ENCODE measurements at regions of chr9 and their contacts with region 1.

Region 1: GRCh38 chr9:92954049-92954861 is 6.9 kb downstream of the FGD3 start:
- DNase-seq: peak; percentile 53 to 95 (median 87)
- ATAC-seq: peak; percentile 87
- H3K4me3 ChIP-seq: peak overlapping the region; percentile 31 to 39
- H3K4me3 Mint-ChIP-seq: peak overlapping the region; percentile 81
- H3K27ac ChIP-seq: peak overlapping the region; percentile 49 to 71
- H3K27ac Mint-ChIP-seq: peak overlapping the region; percentile 97
- H3K4me1 ChIP-seq: peaks cover 71% of the 10 kb centered on the region
- H3K4me1 Mint-ChIP-seq: peaks cover 79% of the 10 kb centered on the region
- H3K27me3 ChIP-seq: no peaks in the 10 kb centered on the region
- H3K27me3 Mint-ChIP-seq: no peaks in the 10 kb centered on the region
- CTCF ChIP-seq: no peak

Region 2: DNA sequence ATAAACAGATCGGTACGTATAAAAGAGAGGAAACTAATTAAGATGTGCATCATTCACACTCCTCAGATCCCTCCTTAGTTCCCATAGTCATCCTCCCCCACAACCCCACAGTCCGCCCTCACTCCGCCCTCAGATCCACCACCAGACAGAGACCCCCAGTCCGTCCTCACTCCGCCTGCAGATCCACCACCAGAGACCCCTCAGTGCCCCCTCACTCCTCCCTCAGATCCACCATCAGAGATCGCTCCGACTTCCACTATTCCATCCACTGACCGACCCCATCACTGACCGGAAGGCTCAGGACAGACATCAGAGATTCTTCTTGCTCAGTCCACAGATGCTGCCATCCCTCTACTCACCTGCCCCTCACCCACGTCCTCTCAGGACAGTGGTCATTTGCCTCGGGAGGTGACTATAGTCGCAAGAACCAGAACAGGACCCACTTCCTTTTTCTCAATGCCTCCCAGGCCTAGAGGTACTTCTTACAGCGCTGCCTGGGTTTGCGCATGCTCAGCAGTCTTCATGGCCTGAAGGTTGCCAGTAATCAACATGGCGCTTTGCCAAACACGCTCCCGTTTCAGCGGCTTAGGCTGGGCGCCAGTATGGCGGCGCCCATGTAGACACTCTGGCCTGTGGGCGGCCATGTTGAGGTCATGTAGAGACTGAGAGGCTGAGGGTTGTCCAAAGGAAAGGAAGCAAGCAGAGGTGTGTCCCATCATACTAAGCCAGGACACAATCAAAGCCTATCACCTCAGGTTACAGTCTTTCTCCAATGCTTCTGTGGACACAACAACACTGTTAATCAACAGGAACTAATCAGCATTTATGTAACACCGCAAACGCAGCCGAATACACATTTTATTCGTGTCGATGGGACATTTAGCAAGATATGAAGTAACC is 76.5 kb before region 1 on chr9 and contains the start of gene ZNF484:
- CTCF ChIA-PET with region 1: interaction called, 3 read pairs
- POLR2A ChIA-PET with region 1: interaction called, 3 read pairs
- intact Hi-C with region 1: loop called in 1 of 2 experiments (anchors 5 kb)
- DNase-seq: peak; percentile 91 to 100 (median 98)
- ATAC-seq: peak; percentile 96
- H3K4me3 ChIP-seq: peak within 1 kb of the TSS; percentile 76 to 85
- H3K4me3 Mint-ChIP-seq: peak within 1 kb of the TSS; percentile 100
- H3K27ac ChIP-seq: peak within 1 kb of the TSS; percentile 81 to 90
- H3K27ac Mint-ChIP-seq: peak within 1 kb of the TSS; percentile 100
- H3K4me1 ChIP-seq: peaks cover 19% of the 10 kb centered on the region
- H3K4me1 Mint-ChIP-seq: peaks cover 48% of the 10 kb centered on the region
- H3K27me3 ChIP-seq: no peaks in the 10 kb centered on the region
- H3K27me3 Mint-ChIP-seq: no peaks in the 10 kb centered on the region
- CTCF ChIP-seq: no peak
- total RNA-seq, gene ZNF484: 18.4 to 18.7 TPM

Region 3: DNA sequence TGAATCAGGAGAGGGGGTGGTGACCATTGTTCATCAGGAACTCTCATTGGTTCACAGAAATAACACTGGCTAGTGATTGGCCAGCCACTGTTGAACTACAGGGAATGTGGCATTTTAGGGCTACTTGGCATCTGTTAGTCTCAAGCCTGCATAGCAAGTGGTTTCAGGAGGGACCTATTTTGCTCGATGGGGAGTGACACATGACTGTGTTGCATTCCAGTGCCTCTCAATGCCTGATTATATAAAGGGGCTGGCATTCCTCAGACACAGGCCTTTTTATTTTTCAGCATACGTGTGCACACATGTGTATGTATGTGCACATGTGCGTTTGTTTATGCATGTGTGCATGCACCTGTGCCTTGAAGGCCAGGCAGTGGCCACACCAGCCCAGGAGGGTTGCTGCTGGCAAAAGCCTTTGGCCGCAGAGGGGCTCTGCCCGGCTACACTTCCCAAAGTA is 16.2 kb after region 1 on chr9:
- CTCF ChIA-PET with region 1: interaction called, 9 read pairs
- POLR2A ChIA-PET with region 1: interaction called, 13 read pairs
- intact Hi-C with region 1: loop called in 1 of 2 experiments (anchors 1 kb)
- DNase-seq: peak in 3 of 9 experiments; percentile 12 to 50 (median 39)
- ATAC-seq: no peak
- H3K4me3 ChIP-seq: peak overlapping the region in 1 of 2 experiments; percentile 59
- H3K4me3 Mint-ChIP-seq: peak overlapping the region; percentile 91
- H3K27ac ChIP-seq: peak overlapping the region; percentile 91 to 94
- H3K27ac Mint-ChIP-seq: peak overlapping the region; percentile 100
- H3K4me1 ChIP-seq: peaks cover 78% of the 10 kb centered on the region
- H3K4me1 Mint-ChIP-seq: peaks cover 80% of the 10 kb centered on the region
- H3K27me3 ChIP-seq: no peaks in the 10 kb centered on the region
- H3K27me3 Mint-ChIP-seq: no peaks in the 10 kb centered on the region
- CTCF ChIP-seq: no peak

Region 4: GRCh38 chr9:92980085-92980745 is 26.0 kb after region 1 on chr9:
- CTCF ChIA-PET with region 1: interaction called, 18 read pairs
- POLR2A ChIA-PET with region 1: interaction called, 4 read pairs
- intact Hi-C with region 1: no loop called
- DNase-seq: no peak
- ATAC-seq: peak; percentile 47
- H3K4me3 ChIP-seq: no peak overlapping the region
- H3K4me3 Mint-ChIP-seq: peak overlapping the region; percentile 38
- H3K27ac ChIP-seq: peak overlapping the region in 1 of 2 experiments; percentile 17
- H3K27ac Mint-ChIP-seq: peak overlapping the region; percentile 90
- H3K4me1 ChIP-seq: peaks cover 65% of the 10 kb centered on the region
- H3K4me1 Mint-ChIP-seq: peaks cover 69% of the 10 kb centered on the region
- H3K27me3 ChIP-seq: no peaks in the 10 kb centered on the region
- H3K27me3 Mint-ChIP-seq: no peaks in the 10 kb centered on the region
- CTCF ChIP-seq: no peak

Region 5: GRCh38 chr9:92986176-92987085 is 32.2 kb after region 1 on chr9:
- CTCF ChIA-PET with region 1: interaction called, 18 read pairs
- POLR2A ChIA-PET with region 1: interaction called, 5 read pairs
- intact Hi-C with region 1: loop called (anchors 1 kb)
- DNase-seq: peak in 7 of 9 experiments; percentile 22 to 80 (median 67)
- ATAC-seq: peak; percentile 76
- H3K4me3 ChIP-seq: no peak overlapping the region
- H3K4me3 Mint-ChIP-seq: peak overlapping the region; percentile 6
- H3K27ac ChIP-seq: peak overlapping the region; percentile 14 to 59
- H3K27ac Mint-ChIP-seq: peak overlapping the region; percentile 86
- H3K4me1 ChIP-seq: peaks cover 73% of the 10 kb centered on the region
- H3K4me1 Mint-ChIP-seq: peaks cover 83% of the 10 kb centered on the region
- H3K27me3 ChIP-seq: no peaks in the 10 kb centered on the region
- H3K27me3 Mint-ChIP-seq: no peaks in the 10 kb centered on the region
- CTCF ChIP-seq: peak; percentile 73

Region 6: GRCh38 chr9:93064392-93065134 is 110.3 kb after region 1 on chr9:
- CTCF ChIA-PET with region 1: interaction called, 7 read pairs
- POLR2A ChIA-PET with region 1: interaction called, 10 read pairs
- intact Hi-C with region 1: loop called in 1 of 2 experiments (anchors 2 kb)
- DNase-seq: peak; percentile 78 to 97 (median 89)
- ATAC-seq: peak; percentile 89
- H3K4me3 ChIP-seq: peak overlapping the region; percentile 24 to 91
- H3K4me3 Mint-ChIP-seq: peak overlapping the region; percentile 83
- H3K27ac ChIP-seq: peak overlapping the region; percentile 70 to 83
- H3K27ac Mint-ChIP-seq: peak overlapping the region; percentile 100
- H3K4me1 ChIP-seq: peaks cover 94% of the 10 kb centered on the region
- H3K4me1 Mint-ChIP-seq: peaks cover 88% of the 10 kb centered on the region
- H3K27me3 ChIP-seq: no peaks in the 10 kb centered on the region
- H3K27me3 Mint-ChIP-seq: no peaks in the 10 kb centered on the region
- CTCF ChIP-seq: no peak

Measured in CD8-positive, alpha-beta T cell (primary cell).